ENCODE measurements at regions of chr15 and their contacts with region 1.

Region 1: DNA sequence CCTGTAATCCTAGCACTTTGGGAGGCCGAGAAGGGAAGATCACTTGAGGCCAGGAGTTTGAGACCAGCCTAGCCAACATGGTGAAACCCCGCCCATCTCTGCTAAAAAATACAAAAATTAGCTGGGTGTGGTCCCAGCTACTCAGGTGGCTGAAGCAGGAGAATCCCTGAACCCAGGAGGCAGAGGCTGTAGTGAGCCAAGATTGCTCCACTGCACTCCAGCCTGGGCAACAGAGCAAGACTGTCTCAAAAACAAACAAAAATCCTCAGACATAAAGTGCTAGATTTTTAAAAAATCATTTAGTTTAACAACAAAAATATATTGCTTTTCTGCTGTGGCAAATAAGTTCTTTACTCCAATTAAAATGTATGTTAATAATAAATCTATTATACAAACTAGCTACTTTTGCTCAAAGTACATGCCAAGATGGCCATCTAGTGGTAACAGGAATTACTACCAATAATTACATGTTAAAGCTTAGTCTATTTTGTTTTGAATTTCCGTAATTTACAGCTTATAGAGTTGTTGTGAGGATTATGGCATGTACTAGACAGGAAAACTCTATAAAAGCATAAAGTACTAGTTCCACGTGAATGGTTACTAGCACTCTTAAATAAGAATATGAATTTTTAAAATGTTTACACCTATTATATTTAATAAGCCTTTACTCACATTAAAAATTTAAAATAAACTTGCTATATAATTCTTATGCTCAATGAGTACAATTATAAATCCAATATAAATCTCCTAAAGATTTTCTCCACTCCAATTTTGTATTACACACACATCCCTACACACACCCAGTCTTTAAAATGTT is 39.0 kb downstream of the GABPB1 start:
- DNase-seq: no peak
- ATAC-seq: peak; percentile 67
- H3K4me3 Mint-ChIP-seq: no peak overlapping the region
- H3K27ac Mint-ChIP-seq: no peak overlapping the region
- H3K4me1 Mint-ChIP-seq: peaks cover 47% of the 10 kb centered on the region
- H3K27me3 Mint-ChIP-seq: no peaks in the 10 kb centered on the region

Region 2: DNA sequence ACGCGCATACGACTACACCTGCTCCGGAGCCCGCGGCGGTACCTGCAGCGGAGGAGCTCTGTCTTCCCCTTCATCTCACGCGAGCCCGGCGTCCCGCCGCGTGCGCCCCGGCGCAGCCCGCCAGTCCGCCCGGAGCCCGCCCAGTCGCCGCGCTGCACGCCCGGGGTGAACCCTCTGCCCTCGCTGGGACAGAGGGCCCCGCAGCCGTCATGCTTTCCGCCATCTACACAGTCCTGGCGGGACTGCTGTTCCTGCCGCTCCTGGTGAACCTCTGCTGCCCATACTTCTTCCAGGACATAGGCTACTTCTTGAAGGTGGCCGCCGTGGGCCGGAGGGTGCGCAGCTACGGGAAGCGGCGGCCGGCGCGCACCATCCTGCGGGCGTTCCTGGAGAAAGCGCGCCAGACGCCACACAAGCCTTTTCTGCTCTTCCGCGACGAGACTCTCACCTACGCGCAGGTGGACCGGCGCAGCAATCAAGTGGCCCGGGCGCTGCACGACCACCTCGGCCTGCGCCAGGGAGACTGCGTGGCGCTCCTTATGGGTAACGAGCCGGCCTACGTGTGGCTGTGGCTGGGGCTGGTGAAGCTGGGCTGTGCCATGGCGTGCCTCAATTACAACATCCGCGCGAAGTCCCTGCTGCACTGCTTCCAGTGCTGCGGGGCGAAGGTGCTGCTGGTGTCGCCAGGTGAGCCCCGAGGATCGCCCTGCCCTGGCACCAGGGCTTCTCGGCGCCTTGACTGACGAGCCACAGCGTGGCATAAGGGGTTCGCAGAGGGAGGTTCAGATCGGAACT is 133.6 kb before region 1 on chr15:
- CTCF ChIA-PET with region 1: interaction called, 72 read pairs
- DNase-seq: peak; percentile 73
- ATAC-seq: peak; percentile 74
- H3K4me3 Mint-ChIP-seq: peak overlapping the region; percentile 96
- H3K27ac Mint-ChIP-seq: peak overlapping the region; percentile 96
- H3K4me1 Mint-ChIP-seq: peaks cover 68% of the 10 kb centered on the region
- H3K27me3 Mint-ChIP-seq: no peaks in the 10 kb centered on the region

Region 3: GRCh38 chr15:50241684-50242450 is 74.2 kb before region 1 on chr15:
- CTCF ChIA-PET with region 1: interaction called, 13 read pairs
- DNase-seq: no peak
- ATAC-seq: peak; percentile 82
- H3K4me3 Mint-ChIP-seq: no peak overlapping the region
- H3K27ac Mint-ChIP-seq: peak overlapping the region; percentile 69
- H3K4me1 Mint-ChIP-seq: peaks cover 31% of the 10 kb centered on the region
- H3K27me3 Mint-ChIP-seq: no peaks in the 10 kb centered on the region

Region 4: DNA sequence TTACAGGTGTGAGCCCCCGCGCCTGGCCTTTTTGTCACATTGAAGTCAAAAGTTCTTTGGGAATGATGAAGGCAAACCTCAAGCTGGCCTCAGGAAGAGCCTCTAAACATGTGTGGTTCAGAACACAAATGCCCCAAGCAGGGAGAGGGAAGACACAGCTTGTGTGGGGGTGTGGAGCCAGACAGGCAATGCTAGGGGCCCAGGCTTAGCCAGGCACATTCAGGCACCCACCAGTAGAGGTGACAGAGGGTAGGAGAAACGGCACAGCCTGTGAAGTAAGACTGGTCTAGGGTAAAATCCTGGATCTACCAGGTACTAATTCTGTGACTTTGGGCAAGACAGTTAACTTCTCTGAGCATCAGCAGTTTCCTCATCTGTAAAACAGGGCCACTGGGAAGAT is 54.0 kb before region 1 on chr15:
- CTCF ChIA-PET with region 1: interaction called, 20 read pairs
- DNase-seq: peak; percentile 69
- ATAC-seq: peak; percentile 42
- H3K4me3 Mint-ChIP-seq: peak overlapping the region; percentile 6
- H3K27ac Mint-ChIP-seq: peak overlapping the region; percentile 93
- H3K4me1 Mint-ChIP-seq: peaks cover 69% of the 10 kb centered on the region
- H3K27me3 Mint-ChIP-seq: no peaks in the 10 kb centered on the region

Region 5: DNA sequence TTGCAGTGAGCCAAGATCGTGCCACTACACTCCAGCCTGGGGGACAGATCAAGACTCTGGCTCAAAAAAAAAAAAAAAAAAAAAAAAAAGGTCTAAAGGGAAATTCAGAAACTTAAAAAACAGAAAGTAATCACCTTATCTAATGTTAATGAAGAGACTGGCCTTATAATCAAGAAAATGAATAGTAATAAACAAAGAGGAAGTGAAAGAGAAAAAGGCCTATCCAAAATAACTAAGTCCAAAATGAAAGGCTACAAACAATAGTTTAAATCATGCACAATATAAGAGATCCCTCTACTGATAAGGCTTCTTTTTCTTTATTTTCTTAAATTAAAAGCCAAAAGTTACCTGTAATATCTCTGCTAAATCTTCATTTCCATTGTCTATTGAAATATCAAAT is 13.4 kb before region 1 on chr15:
- CTCF ChIA-PET with region 1: interaction called, 19 read pairs
- DNase-seq: no peak
- ATAC-seq: no peak
- H3K4me3 Mint-ChIP-seq: no peak overlapping the region
- H3K27ac Mint-ChIP-seq: peak overlapping the region; percentile 25
- H3K4me1 Mint-ChIP-seq: no peaks in the 10 kb centered on the region
- H3K27me3 Mint-ChIP-seq: no peaks in the 10 kb centered on the region